Activated CD4-positive, alpha-beta T cell treated with anti-CD3 and anti-CD28 coated beads for 36 hours (primary cell): ENCODE measurements at regions of chr22 and their contacts with region 1.

Region 1: DNA sequence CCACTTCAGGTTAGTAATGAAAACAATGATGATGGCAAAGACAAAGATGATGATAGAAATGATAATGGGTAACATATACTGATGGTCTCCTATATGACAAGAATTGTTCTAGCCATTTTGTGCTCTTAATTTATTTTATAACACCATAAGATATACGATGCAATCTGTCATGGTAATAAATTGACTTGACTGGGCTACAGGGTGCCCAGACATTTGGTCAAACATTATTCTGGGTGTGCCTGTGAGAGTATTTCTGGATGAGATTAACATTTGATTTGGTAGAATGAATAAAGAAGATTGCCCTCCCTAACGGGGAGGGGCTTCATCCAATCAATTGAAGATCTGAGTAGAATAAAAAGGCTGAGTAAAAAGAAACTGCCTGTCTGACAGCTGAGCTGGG is 237.3 kb downstream of the LARGE1 start:
- DNase-seq: no peak
- ATAC-seq: no peak
- H3K4me3 Mint-ChIP-seq: no peak overlapping the region
- H3K27ac Mint-ChIP-seq: no peak overlapping the region
- H3K4me1 Mint-ChIP-seq: no peaks in the 10 kb centered on the region
- H3K27me3 Mint-ChIP-seq: no peaks in the 10 kb centered on the region

Region 2: DNA sequence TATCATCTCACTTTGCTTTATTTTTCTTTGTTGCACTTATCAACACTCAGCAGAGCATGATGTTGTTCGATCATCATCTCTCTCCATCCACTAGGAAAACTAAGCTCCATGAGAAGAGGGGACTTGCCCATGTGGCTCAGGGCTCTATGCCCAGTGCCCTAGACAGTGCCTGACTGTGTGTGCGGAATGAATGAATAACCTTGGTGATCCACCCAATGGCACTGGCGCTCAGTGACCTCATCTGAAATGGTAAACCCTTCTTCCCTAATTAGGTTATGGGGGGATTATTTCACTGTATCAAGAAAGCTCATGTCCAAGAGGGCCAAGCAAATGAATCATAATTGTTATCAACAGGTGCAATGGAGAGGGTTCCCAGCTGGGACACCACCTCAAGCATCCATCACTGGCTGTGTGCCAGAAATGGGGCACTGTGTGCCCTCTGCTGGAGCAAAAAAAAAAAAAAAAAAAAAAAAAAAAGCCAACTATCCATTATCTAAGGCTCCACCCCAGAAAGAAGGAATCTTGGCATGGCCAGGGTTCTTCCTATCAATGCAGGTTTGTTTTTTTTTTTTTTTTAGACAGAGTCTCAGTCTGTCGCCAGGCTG is 64.8 kb after region 1 on chr22:
- CTCF ChIA-PET with region 1: no interaction called
- POLR2A ChIA-PET with region 1: no interaction called
- intact Hi-C with region 1: loop called in 1 of 2 experiments (anchors 2 kb)
- DNase-seq: peak; percentile 6
- ATAC-seq: no peak
- H3K4me3 Mint-ChIP-seq: no peak overlapping the region
- H3K27ac Mint-ChIP-seq: no peak overlapping the region
- H3K4me1 Mint-ChIP-seq: no peaks in the 10 kb centered on the region
- H3K27me3 Mint-ChIP-seq: no peaks in the 10 kb centered on the region